Tibial artery (tissue), 4 donors: ENCODE measurements at regions of chr2 and their contacts with region 1.

Region 1: DNA sequence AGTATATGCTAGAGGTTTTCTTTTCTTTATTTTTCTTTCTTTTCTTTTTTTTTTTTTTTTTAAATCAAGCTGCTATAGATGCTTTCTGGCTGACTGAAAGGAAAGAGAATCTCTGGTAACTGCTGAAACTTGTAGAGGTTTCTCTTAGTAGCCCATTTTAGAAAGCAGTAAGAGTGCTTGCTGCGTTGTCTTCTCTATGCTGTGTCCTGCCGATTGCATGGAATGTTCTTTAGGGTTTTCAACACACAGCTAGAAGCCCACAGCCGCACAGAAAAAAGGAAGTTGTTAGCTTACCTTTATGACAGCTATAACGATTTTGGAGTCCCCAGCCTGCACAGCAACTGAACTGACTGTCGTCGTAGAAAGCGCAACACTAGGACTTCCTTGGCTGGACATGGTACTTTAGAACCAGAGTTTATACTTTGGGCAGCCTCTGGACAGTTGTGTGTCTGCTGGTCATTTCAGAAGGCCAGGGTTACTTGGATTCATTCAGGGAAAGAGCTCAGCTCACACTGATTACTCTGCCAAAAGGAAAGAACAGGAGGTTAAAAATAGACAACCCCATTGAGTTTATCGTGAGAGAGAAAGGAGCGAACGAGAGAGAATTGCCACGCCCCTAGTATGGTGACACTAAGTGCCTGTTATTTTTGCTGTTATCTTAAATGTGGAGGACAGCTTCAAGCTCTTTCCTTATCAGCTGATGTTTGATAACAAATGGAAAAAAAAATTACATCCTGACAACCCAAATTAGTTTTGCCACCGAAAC is at the start of gene CCDC141:
- DNase-seq: no peak
- H3K4me3 ChIP-seq: peak within 1 kb of the TSS; percentile 19 to 28
- H3K27ac ChIP-seq: peak within 1 kb of the TSS in 1 of 2 donors; percentile 37
- H3K4me1 ChIP-seq: peaks cover 0 to 23% (median 0%) of the 10 kb centered on the region in 4 donors
- H3K27me3 ChIP-seq: no peaks in the 10 kb centered on the region
- CTCF ChIP-seq: no peak

Region 2: GRCh38 chr2:179037807-179038206 is 11.9 kb before region 1 on chr2:
- intact Hi-C with region 1: loop called (anchors 1 kb)
- DNase-seq: no peak
- H3K4me3 ChIP-seq: no peak overlapping the region
- H3K27ac ChIP-seq: no peak overlapping the region
- H3K4me1 ChIP-seq: no peaks in the 10 kb centered on the region
- H3K27me3 ChIP-seq: no peaks in the 10 kb centered on the region
- CTCF ChIP-seq: no peak

Region 3: DNA sequence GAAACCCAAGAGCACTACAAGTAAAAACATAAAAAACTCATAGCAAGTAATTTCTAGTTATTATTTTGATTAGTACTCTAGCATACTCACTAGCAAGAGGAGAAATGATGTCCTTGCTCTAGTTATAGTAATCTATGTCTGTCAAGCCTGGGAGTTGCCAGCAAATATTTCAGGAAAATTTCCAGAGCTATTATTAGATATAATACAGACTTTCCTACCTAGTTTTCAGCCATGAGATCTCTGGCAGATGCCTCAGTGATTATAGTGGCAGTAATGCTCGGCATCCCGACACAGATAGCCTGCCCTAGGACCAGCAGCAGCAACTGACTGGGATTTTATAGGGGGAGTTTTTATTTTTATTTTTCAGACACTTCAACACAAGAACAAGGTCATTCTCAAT is 587.3 kb after region 1 on chr2:
- intact Hi-C with region 1: no loop called
- DNase-seq: no peak
- H3K4me3 ChIP-seq: no peak overlapping the region
- H3K27ac ChIP-seq: no peak overlapping the region
- H3K4me1 ChIP-seq: peaks cover 0 to 12% (median 5%) of the 10 kb centered on the region in 4 donors
- H3K27me3 ChIP-seq: no peaks in the 10 kb centered on the region
- CTCF ChIP-seq: no peak